ENCODE measurements at regions of chr11 and their contacts with region 1.

Region 1: DNA sequence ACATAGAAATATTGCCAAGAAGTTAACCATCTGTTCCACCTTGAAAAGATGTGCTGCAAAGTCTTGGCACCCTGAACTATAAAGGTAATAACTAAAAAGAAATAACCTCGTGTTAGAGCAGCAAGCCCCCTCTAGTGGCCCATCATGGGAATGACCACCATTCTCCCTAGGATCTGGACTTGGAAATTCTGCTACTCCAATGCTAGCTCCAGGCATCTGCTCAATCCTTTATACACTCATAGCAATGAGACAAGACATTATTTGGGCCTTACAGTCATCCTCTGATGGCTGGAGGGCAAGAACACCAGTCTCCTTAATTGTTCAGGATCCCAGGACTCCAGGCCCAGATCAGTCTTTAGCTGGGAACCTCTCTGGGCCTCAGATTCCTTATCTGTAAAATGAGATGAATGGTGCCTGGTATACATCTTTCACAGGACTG is 76.0 kb downstream of the CWC15 start:
- DNase-seq: peak; percentile 45 to 86
- H3K4me3 ChIP-seq: no peak overlapping the region
- CTCF ChIP-seq: no peak
- POLR2A ChIP-seq: no peak

Region 2: GRCh38 chr11:94623120-94623735 is 274.1 kb before region 1 on chr11:
- intact Hi-C with region 1: loop called (anchors 5 kb)
- DNase-seq: peak in 1 of 2 donors; percentile 66
- H3K4me3 ChIP-seq: no peak overlapping the region
- CTCF ChIP-seq: peak in 1 of 3 donors; percentile 31
- POLR2A ChIP-seq: no peak